ENCODE measurements at regions of chr1 and their contacts with region 1.

Region 1: GRCh38 chr1:53837924-53838652 is at the start of gene NDC1:
- DNase-seq: peak; percentile 84 to 95 (median 92)
- ATAC-seq: peak; percentile 95
- H3K4me3 ChIP-seq: peak within 1 kb of the TSS; percentile 92
- H3K4me3 Mint-ChIP-seq: peak within 1 kb of the TSS; percentile 96 to 100 (median 99)
- H3K27ac ChIP-seq: peak within 1 kb of the TSS; percentile 95
- H3K27ac Mint-ChIP-seq: peak within 1 kb of the TSS; percentile 96 to 99 (median 98)
- H3K4me1 ChIP-seq: no peaks in the 10 kb centered on the region
- H3K4me1 Mint-ChIP-seq: peaks cover 10 to 41% (median 30%) of the 10 kb centered on the region in 7 donors
- H3K27me3 ChIP-seq: no peaks in the 10 kb centered on the region
- H3K27me3 Mint-ChIP-seq: no peaks in the 10 kb centered on the region
- total RNA-seq, gene NDC1: 6.9 to 20.2 (median 13.2) TPM

Region 2: GRCh38 chr1:53014791-53015507 is 823.1 kb before region 1 on chr1:
- CTCF ChIA-PET with region 1: no interaction called
- POLR2A ChIA-PET with region 1: no interaction called
- intact Hi-C with region 1: loop called in 1 of 2 experiments (anchors 5 kb)
- DNase-seq: peak; percentile 27 to 91 (median 84)
- ATAC-seq: peak; percentile 100
- H3K4me3 ChIP-seq: peak overlapping the region; percentile 65
- H3K4me3 Mint-ChIP-seq: peak overlapping the region; percentile 81 to 96 (median 90)
- H3K27ac ChIP-seq: peak overlapping the region; percentile 57
- H3K27ac Mint-ChIP-seq: peak overlapping the region; percentile 57 to 92 (median 84)
- H3K4me1 ChIP-seq: peaks cover 14 to 16% of the 10 kb centered on the region in 2 donors
- H3K4me1 Mint-ChIP-seq: peaks cover 20 to 48% (median 40%) of the 10 kb centered on the region in 7 donors
- H3K27me3 ChIP-seq: no peaks in the 10 kb centered on the region
- H3K27me3 Mint-ChIP-seq: no peaks in the 10 kb centered on the region

Region 3: DNA sequence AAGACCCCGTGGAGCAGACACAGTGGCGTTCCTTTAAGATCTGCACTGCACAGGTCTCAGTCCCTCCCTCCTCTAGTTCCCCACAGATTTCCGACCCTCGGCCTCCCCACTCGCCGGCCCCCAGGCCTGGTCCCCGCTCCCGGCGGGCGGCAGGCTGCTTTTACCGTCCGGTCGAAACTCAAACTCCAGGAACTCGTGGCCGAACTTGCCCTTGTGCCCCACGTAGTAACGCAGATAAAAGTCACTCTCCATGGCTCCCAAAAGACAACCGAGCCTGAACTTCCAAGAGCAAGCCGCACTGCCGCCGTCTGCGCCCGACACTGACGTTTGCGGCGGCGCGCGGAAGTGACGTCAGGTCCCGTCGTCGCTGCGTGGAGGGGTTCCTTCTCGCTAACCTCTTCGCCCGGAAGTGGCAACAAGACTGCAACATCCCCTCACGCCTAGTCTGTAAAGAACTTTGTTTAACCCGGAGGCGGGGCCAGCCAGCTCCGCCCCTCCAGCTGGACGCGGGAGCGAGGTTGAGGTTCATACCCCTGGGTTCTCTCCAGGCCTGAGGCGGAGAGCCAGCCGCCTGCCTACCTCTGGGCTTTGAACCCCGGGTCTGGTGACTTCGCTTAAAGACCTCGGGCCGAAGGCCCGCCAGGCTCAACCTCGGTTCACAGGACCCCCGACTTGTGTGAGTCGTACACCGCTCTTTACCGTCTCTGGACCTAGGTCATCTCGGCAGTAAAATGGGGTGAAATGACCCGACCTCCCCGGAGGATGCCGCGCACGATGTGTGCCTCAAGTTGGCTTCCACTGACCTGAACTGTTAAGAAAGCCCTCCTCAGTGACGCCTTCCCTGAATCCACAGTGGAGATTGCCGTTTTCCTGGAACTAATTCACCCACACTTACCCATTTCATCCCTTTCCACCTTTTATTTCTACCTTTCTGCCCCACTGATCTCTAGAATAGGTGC is 599.6 kb before region 1 on chr1 and contains the start of gene MAGOH:
- CTCF ChIA-PET with region 1: no interaction called
- POLR2A ChIA-PET with region 1: no interaction called
- intact Hi-C with region 1: loop called (anchors 1 to 2 kb)
- DNase-seq: peak; percentile 90 to 96 (median 95)
- ATAC-seq: peak; percentile 98
- H3K4me3 ChIP-seq: peak within 1 kb of the TSS; percentile 97
- H3K4me3 Mint-ChIP-seq: peak within 1 kb of the TSS; percentile 96 to 99 (median 98)
- H3K27ac ChIP-seq: peak within 1 kb of the TSS; percentile 94
- H3K27ac Mint-ChIP-seq: peak within 1 kb of the TSS; percentile 92 to 99 (median 98)
- H3K4me1 ChIP-seq: peaks cover 18 to 19% of the 10 kb centered on the region in 2 donors
- H3K4me1 Mint-ChIP-seq: peaks cover 18 to 47% (median 32%) of the 10 kb centered on the region in 7 donors
- H3K27me3 ChIP-seq: no peaks in the 10 kb centered on the region
- H3K27me3 Mint-ChIP-seq: peaks cover 0 to 2% (median 0%) of the 10 kb centered on the region in 5 donors
- total RNA-seq, gene MAGOH: 37.7 to 76.7 (median 52.3) TPM

Region 4: GRCh38 chr1:53739109-53739681 is 98.9 kb before region 1 on chr1 and contains the start of gene GLIS1:
- CTCF ChIA-PET with region 1: no interaction called
- POLR2A ChIA-PET with region 1: no interaction called
- intact Hi-C with region 1: no loop called
- DNase-seq: peak in 2 of 9 donors; percentile 29 to 80
- ATAC-seq: peak; percentile 88
- H3K4me3 ChIP-seq: no peak within 1 kb of the TSS
- H3K4me3 Mint-ChIP-seq: peak within 1 kb of the TSS; percentile 50 to 77 (median 62)
- H3K27ac ChIP-seq: no peak within 1 kb of the TSS
- H3K27ac Mint-ChIP-seq: no peak within 1 kb of the TSS
- H3K4me1 ChIP-seq: no peaks in the 10 kb centered on the region
- H3K4me1 Mint-ChIP-seq: peaks cover 0 to 7% (median 3%) of the 10 kb centered on the region in 7 donors
- H3K27me3 ChIP-seq: peaks cover 0 to 10% of the 10 kb centered on the region in 2 donors
- H3K27me3 Mint-ChIP-seq: peaks cover 53 to 77% (median 58%) of the 10 kb centered on the region in 5 donors
- total RNA-seq, gene GLIS1: not detected

Region 5: GRCh38 chr1:53811414-53811851 is 26.7 kb before region 1 on chr1:
- CTCF ChIA-PET with region 1: no interaction called
- POLR2A ChIA-PET with region 1: no interaction called
- intact Hi-C with region 1: no loop called
- DNase-seq: no peak
- ATAC-seq: no peak
- H3K4me3 ChIP-seq: no peak overlapping the region
- H3K4me3 Mint-ChIP-seq: no peak overlapping the region
- H3K27ac ChIP-seq: no peak overlapping the region
- H3K27ac Mint-ChIP-seq: peak overlapping the region in 2 of 9 donors; percentile 29 to 51
- H3K4me1 ChIP-seq: no peaks in the 10 kb centered on the region
- H3K4me1 Mint-ChIP-seq: peaks cover 0 to 33% (median 10%) of the 10 kb centered on the region in 7 donors
- H3K27me3 ChIP-seq: no peaks in the 10 kb centered on the region
- H3K27me3 Mint-ChIP-seq: no peaks in the 10 kb centered on the region

Region 6: GRCh38 chr1:53889304-53890298 is 51.5 kb after region 1 on chr1 and contains the start of gene YIPF1:
- CTCF ChIA-PET with region 1: interaction called, 3 read pairs
- POLR2A ChIA-PET with region 1: no interaction called
- intact Hi-C with region 1: loop called (anchors 1 kb)
- DNase-seq: peak; percentile 61 to 88 (median 85)
- ATAC-seq: peak; percentile 98
- H3K4me3 ChIP-seq: peak within 1 kb of the TSS; percentile 79
- H3K4me3 Mint-ChIP-seq: peak within 1 kb of the TSS; percentile 88 to 98 (median 96)
- H3K27ac ChIP-seq: peak within 1 kb of the TSS; percentile 75
- H3K27ac Mint-ChIP-seq: peak within 1 kb of the TSS; percentile 89 to 97 (median 95)
- H3K4me1 ChIP-seq: peaks cover 20 to 23% of the 10 kb centered on the region in 2 donors
- H3K4me1 Mint-ChIP-seq: peaks cover 26 to 55% (median 51%) of the 10 kb centered on the region in 7 donors
- H3K27me3 ChIP-seq: no peaks in the 10 kb centered on the region
- H3K27me3 Mint-ChIP-seq: peaks cover 0 to 2% (median 0%) of the 10 kb centered on the region in 5 donors
- total RNA-seq, gene YIPF1: 10.5 to 18.0 (median 16.3) TPM

Region 7: GRCh38 chr1:54715493-54716298 is 877.6 kb after region 1 on chr1 and contains the start of gene TTC4:
- CTCF ChIA-PET with region 1: no interaction called
- POLR2A ChIA-PET with region 1: no interaction called
- intact Hi-C with region 1: loop called (anchors 1 kb)
- DNase-seq: peak; percentile 71 to 92 (median 85)
- ATAC-seq: peak; percentile 99
- H3K4me3 ChIP-seq: peak within 1 kb of the TSS; percentile 86
- H3K4me3 Mint-ChIP-seq: peak within 1 kb of the TSS; percentile 81 to 96 (median 88)
- H3K27ac ChIP-seq: peak within 1 kb of the TSS; percentile 84
- H3K27ac Mint-ChIP-seq: peak within 1 kb of the TSS; percentile 58 to 94 (median 91)
- H3K4me1 ChIP-seq: peaks cover 14 to 15% of the 10 kb centered on the region in 2 donors
- H3K4me1 Mint-ChIP-seq: peaks cover 15 to 42% (median 34%) of the 10 kb centered on the region in 7 donors
- H3K27me3 ChIP-seq: no peaks in the 10 kb centered on the region
- H3K27me3 Mint-ChIP-seq: no peaks in the 10 kb centered on the region
- total RNA-seq, gene TTC4: 11.6 to 25.8 (median 21.4) TPM

Region 8: GRCh38 chr1:54800899-54801759 is 963.0 kb after region 1 on chr1 and contains the start of gene TTC22:
- CTCF ChIA-PET with region 1: no interaction called
- POLR2A ChIA-PET with region 1: no interaction called
- intact Hi-C with region 1: loop called in 1 of 2 experiments (anchors 5 kb)
- DNase-seq: peak; percentile 49 to 71 (median 64)
- ATAC-seq: peak; percentile 91
- H3K4me3 ChIP-seq: peak within 1 kb of the TSS; percentile 94
- H3K4me3 Mint-ChIP-seq: peak within 1 kb of the TSS; percentile 90 to 99 (median 96)
- H3K27ac ChIP-seq: peak within 1 kb of the TSS; percentile 74
- H3K27ac Mint-ChIP-seq: peak within 1 kb of the TSS; percentile 82 to 97 (median 90)
- H3K4me1 ChIP-seq: peaks cover 38 to 44% of the 10 kb centered on the region in 2 donors
- H3K4me1 Mint-ChIP-seq: peaks cover 32 to 77% (median 56%) of the 10 kb centered on the region in 7 donors
- H3K27me3 ChIP-seq: no peaks in the 10 kb centered on the region
- H3K27me3 Mint-ChIP-seq: no peaks in the 10 kb centered on the region
- total RNA-seq, gene TTC22: 7.0 to 16.6 (median 9.8) TPM

Measured in naive thymus-derived CD4-positive, alpha-beta T cell (primary cell).